Esophagus muscularis mucosa (tissue), 4 donors: ENCODE measurements at regions of chr9 and their contacts with region 1.

Region 1: GRCh38 chr9:127396808-127397497 is at the start of gene SLC2A8:
- DNase-seq: peak; percentile 100
- H3K4me3 ChIP-seq: peak within 1 kb of the TSS; percentile 73 to 98 (median 94)
- H3K27ac ChIP-seq: peak within 1 kb of the TSS; percentile 90 to 98 (median 96)
- H3K4me1 ChIP-seq: peaks cover 14 to 32% (median 27%) of the 10 kb centered on the region in 4 donors
- H3K27me3 ChIP-seq: no peaks in the 10 kb centered on the region
- CTCF ChIP-seq: peak in 2 of 3 experiments; percentile 16 to 23
- EP300 ChIP-seq: no peak
- POLR2A ChIP-seq: peak; percentile 59
- total RNA-seq, gene SLC2A8: 27.0 to 34.5 (median 31.7) TPM

Region 2: GRCh38 chr9:127244609-127245601 is 152.0 kb before region 1 on chr9:
- intact Hi-C with region 1: no loop called
- DNase-seq: peak; percentile 98
- H3K4me3 ChIP-seq: peak overlapping the region; percentile 65 to 79 (median 66)
- H3K27ac ChIP-seq: peak overlapping the region; percentile 79 to 86 (median 83)
- H3K4me1 ChIP-seq: peaks cover 7 to 10% (median 8%) of the 10 kb centered on the region in 4 donors
- H3K27me3 ChIP-seq: no peaks in the 10 kb centered on the region
- CTCF ChIP-seq: peak in 1 of 3 experiments; percentile 11
- EP300 ChIP-seq: no peak
- POLR2A ChIP-seq: no peak

Region 3: DNA sequence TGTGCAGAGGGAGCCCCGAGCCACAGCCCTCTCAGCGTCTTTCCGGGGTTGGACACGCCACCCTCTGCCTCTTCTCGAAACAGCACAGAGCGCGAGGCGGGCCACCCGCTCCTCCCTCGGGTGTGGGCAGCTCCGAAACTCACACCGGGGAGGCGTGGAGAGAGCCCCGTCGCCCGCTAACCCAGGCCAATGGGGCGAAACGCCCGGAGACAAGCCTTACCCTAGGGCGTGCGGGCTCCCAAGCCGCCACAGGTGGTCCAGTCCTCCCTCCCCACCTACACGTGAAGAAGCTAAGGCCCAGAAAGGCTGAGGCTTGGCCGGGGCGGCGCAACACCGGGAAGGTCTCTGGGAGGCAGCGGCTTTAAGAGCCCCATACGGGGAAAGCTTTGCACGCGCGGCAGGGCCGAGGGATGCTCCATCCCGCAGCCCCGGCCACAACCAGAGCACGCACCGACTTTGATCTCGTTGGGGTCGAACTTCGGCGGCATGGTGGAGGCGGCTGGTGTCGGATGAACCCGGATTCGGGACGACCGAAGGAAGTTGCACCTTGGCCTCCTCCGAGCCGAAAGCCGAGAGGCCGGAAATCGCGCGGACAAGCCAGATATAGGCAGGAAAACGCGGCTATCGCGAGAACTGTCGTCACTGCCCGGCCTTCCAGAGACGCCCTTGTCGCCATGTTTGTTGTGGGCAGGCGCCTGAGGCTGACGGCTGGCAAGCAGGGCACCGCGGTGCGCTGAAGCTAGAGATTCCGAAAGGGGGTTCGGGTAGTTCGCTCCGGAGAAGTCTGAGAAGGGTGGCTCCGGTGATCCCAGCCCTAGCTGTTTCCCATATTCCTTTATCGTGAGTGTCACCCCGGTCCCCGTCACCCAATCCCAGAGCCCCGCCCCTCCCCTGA is 54.1 kb after region 1 on chr9 and contains the starts of genes LRSAM1 and RPL12:
- intact Hi-C with region 1: loop called (anchors 2 kb)
- DNase-seq: peak; percentile 99
- H3K4me3 ChIP-seq: peak within 1 kb of the TSS; percentile 81 to 96 (median 82)
- H3K27ac ChIP-seq: peak within 1 kb of the TSS; percentile 93 to 96 (median 95)
- H3K4me1 ChIP-seq: peaks cover 41 to 55% (median 45%) of the 10 kb centered on the region in 4 donors
- H3K27me3 ChIP-seq: no peaks in the 10 kb centered on the region
- CTCF ChIP-seq: peak in 2 of 3 experiments; percentile 18 to 21
- EP300 ChIP-seq: no peak
- POLR2A ChIP-seq: peak; percentile 100
- total RNA-seq, gene LRSAM1: 13.6 to 26.2 (median 18.8) TPM
- total RNA-seq, gene RPL12: 880 to 2,334 (median 1,732) TPM